Panc1 (cell line): ENCODE measurements at regions of chr11 and their contacts with region 1.

Region 1: DNA sequence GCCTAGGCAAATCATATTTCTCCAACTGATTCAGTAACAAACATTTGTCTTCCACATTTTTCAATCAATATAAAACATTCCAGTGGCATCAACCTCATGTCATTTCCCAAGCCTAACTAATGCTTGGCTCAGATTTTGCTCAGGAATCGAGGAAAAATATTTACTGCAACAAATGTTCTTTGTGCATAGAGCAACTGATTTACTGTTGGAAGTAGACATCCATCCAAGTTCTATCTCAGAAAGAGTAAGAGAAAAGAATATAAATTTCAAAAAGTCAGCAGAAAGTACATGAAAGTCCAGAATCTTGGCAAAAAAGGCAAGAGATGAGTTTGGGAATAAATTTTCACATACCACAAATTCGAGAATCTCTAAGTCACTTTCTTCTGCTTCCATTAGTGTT is 2245.0 kb upstream of the RAG2 start:
- DNase-seq: no peak
- ATAC-seq: no peak
- H3K4me3 ChIP-seq: no peak overlapping the region
- H3K27ac ChIP-seq: no peak overlapping the region
- H3K4me1 ChIP-seq: no peaks in the 10 kb centered on the region
- H3K27me3 ChIP-seq: no peaks in the 10 kb centered on the region
- CTCF ChIP-seq: no peak

Region 2: DNA sequence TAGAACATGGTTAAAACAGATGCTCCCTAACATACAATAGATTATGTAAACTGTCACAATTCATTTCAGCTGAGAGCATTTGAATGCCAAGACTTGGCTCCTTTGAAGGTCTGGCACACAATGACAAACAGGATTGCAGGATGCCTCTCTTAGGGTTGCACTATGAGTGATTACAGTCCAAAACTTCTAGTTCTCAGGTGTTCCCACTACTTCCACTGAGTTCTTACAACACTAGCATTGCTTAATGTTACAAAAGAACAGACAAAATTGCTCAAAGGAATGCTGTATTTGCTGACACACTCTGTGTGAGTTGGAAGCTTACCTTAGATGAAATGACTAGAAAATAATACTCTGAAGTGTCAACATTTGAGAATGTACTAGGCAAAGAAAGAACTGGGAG is 168.8 kb after region 1 on chr11:
- CTCF ChIA-PET with region 1: no interaction called
- POLR2A ChIA-PET with region 1: no interaction called
- in situ Hi-C with region 1: no loop called
- intact Hi-C with region 1: loop called (anchors 10 kb)
- DNase-seq: no peak
- ATAC-seq: no peak
- H3K4me3 ChIP-seq: no peak overlapping the region
- H3K27ac ChIP-seq: no peak overlapping the region
- H3K4me1 ChIP-seq: no peaks in the 10 kb centered on the region
- H3K27me3 ChIP-seq: no peaks in the 10 kb centered on the region
- CTCF ChIP-seq: no peak